ENCODE measurements at regions of chr9 and their contacts with region 1.

Region 1: DNA sequence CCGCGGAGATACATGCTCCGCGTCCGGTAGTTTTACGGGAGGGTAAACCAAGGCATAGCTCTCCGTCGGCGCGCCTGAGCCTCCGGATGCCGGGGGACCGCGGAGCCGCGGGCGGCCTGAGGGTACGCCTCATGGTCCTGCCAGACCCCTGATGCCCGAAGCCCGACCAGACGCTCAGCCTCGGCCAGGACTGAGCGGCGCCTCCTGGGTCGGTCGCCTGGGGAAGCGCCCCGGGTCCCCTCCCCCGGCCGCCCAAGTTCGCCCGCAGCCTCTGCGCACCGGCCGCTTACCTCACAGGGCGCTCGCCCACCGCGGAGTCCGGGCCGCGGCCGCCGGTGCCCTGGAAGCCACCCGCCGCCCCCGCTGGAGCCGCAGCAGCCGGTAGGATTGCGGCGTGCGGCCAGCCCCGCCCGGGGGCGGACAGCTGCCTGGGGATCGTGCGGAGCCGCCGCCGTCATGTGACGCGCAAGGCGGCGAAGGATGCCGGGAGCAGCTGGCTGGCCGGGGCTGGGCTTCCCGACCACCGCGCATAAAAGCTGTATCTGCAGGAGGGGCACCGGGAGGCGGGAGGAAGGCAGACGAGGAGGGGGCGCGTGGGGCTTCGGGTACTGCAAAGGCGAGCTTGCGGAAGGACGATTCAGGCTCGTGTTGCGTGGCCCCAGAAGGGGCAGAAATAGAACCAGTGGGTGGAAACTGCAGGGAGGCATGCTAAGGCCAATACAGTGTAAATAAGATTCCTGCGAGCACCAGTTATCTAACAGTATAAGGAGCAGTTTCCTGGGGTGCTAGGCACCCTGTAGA is at the start of gene FBXO10:
- DNase-seq: peak; percentile 61 to 82 (median 70)
- H3K4me3 ChIP-seq: peak within 1 kb of the TSS; percentile 54
- H3K27ac ChIP-seq: peak within 1 kb of the TSS; percentile 25 to 53
- H3K4me1 ChIP-seq: peaks cover 4% of the 10 kb centered on the region
- H3K27me3 ChIP-seq: no peaks in the 10 kb centered on the region
- CTCF ChIP-seq: no peak
- EP300 ChIP-seq: no peak
- POLR2A ChIP-seq: no peak
- total RNA-seq, gene FBXO10: 3.0 to 7.2 (median 4.7) TPM

Region 2: DNA sequence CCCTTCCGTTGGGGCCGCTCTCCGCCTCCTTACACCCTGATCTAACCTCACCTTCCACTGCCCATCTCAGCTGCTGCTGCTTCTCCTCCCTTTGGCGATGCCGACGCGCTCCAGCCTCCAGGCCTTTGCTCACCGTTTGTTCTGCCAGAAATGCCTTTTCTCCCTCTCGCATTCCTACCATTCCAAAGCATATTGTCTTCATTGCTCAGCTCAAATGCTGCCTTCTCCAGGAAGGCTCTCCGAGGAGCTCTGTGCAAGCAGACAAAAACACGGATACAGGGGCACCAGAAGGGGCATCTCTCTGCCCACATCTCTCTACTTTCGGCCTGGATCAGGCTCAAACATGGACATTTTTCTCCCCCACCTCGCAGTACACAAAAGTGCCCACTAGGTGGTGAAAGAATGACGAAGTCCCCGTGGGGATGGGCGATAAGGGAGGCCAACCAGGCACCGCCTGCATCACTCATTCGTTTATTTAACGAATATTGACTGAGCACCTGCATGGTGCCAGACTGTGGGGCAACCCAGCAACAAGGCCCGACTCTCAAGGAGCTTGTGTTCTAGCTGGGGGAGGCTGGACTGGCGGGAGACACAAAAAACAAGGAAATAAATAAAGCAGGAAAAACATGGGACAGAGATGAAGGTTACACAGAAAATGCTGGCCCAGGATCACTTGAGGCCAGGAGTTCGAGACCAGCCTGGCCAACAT is 161.0 kb before region 1 on chr9:
- intact Hi-C with region 1: loop called in 1 of 4 experiments (anchors 10 kb)
- DNase-seq: peak; percentile 49 to 73 (median 67)
- H3K4me3 ChIP-seq: no peak overlapping the region
- H3K27ac ChIP-seq: no peak overlapping the region
- H3K4me1 ChIP-seq: no peaks in the 10 kb centered on the region
- H3K27me3 ChIP-seq: no peaks in the 10 kb centered on the region
- CTCF ChIP-seq: peak; percentile 64 to 76 (median 69)
- EP300 ChIP-seq: no peak
- POLR2A ChIP-seq: no peak